Caco-2 (cell line): ENCODE measurements at regions of chr17 and their contacts with region 1.

Region 1: GRCh38 chr17:80649678-80650672 is 105.3 kb downstream of the RPTOR start:
- DNase-seq: peak; percentile 80 to 83
- H3K4me3 ChIP-seq: no peak overlapping the region
- H3K4me3 Mint-ChIP-seq: no peak overlapping the region
- H3K27ac Mint-ChIP-seq: peak overlapping the region; percentile 20
- H3K4me1 ChIP-seq: peaks cover 21% of the 10 kb centered on the region
- H3K4me1 Mint-ChIP-seq: peaks cover 26% of the 10 kb centered on the region
- H3K27me3 ChIP-seq: no peaks in the 10 kb centered on the region
- H3K27me3 Mint-ChIP-seq: no peaks in the 10 kb centered on the region
- CTCF ChIP-seq: peak; percentile 93 to 99

Region 2: DNA sequence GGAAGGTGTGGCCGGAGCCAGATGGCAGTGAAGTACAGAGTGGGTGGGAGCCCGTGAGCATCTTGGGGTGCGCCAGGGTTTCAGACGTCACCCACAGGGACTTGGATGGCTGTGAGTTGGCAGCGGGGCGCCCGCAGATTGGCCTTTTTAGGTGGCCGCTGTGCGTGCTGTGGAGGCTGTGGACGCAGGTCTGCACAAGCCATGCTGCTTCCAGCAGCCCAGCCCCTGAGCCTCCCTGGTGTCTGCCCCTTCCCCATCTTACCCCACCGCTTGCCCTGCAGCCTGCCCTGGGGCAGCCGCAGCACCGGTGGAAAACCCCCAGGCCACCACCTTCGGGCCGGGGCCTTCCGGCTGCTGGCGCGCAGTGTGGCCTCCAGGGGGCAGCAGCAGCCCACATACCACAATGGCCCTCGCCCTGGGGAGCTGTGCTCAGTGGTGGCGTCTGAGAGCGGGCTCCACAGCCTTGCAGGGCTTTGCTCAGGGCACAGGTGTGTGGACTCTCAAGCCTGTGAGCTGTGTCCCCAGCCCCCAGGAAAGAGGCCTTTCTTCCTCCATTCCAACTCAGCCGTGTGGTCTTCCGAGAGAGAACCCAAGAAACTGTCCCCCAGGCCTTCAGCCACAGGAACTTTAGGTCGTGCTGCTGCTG is 223.2 kb before region 1 on chr17:
- CTCF ChIA-PET with region 1: interaction called, 17 read pairs
- POLR2A ChIA-PET with region 1: no interaction called
- intact Hi-C with region 1: loop called (anchors 1 kb)
- DNase-seq: peak; percentile 80 to 91
- H3K4me3 ChIP-seq: no peak overlapping the region
- H3K4me3 Mint-ChIP-seq: no peak overlapping the region
- H3K27ac Mint-ChIP-seq: no peak overlapping the region
- H3K4me1 ChIP-seq: no peaks in the 10 kb centered on the region
- H3K4me1 Mint-ChIP-seq: no peaks in the 10 kb centered on the region
- H3K27me3 ChIP-seq: no peaks in the 10 kb centered on the region
- H3K27me3 Mint-ChIP-seq: peaks cover 6% of the 10 kb centered on the region
- CTCF ChIP-seq: peak; percentile 97 to 99

Region 3: GRCh38 chr17:80477647-80478478 is 172.1 kb before region 1 on chr17:
- CTCF ChIA-PET with region 1: no interaction called
- POLR2A ChIA-PET with region 1: no interaction called
- intact Hi-C with region 1: loop called (anchors 2 kb)
- DNase-seq: no peak
- H3K4me3 ChIP-seq: no peak overlapping the region; the same call in 1 of the 2 replicates
- H3K4me3 Mint-ChIP-seq: no peak overlapping the region
- H3K27ac Mint-ChIP-seq: no peak overlapping the region
- H3K4me1 ChIP-seq: peaks cover 29% of the 10 kb centered on the region
- H3K4me1 Mint-ChIP-seq: peaks cover 11% of the 10 kb centered on the region
- H3K27me3 ChIP-seq: peaks cover 6% of the 10 kb centered on the region
- H3K27me3 Mint-ChIP-seq: peaks cover 34% of the 10 kb centered on the region
- CTCF ChIP-seq: no peak

Region 4: DNA sequence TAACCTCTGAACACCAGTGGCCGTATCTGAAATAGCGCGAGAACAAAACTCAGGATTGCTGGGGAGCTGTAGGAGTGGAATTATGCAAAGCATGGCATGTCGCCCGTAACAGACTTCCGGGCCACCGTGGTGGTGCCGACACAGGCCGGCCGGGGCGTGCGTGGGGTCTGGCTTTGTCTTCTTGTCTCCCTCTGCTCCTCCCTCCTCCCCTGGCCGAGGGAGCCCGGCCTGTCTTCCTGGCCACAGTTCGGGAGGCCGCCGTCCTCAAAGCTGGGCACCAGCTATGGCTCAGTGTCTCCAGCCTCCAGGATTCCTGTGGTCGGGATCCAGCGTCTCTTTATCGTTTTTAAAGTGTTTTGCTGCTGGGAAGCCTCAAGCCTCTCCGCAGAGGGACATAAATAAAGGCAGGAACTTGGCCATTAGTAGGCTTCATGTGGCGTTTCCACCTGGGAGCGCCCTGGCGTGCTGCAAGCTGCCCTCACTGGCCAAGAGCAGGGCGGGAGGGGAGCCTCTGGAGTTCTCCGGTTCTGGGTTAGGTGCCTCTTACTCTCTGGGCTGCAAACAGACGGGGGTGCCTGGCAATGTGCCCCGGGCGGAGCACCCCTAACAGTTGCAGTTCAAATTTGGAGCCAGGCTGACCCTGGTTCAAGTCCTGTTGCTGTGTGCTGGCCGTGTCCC is 151.6 kb before region 1 on chr17:
- CTCF ChIA-PET with region 1: no interaction called
- POLR2A ChIA-PET with region 1: no interaction called
- intact Hi-C with region 1: no loop called
- DNase-seq: no peak
- H3K4me3 ChIP-seq: no peak overlapping the region
- H3K4me3 Mint-ChIP-seq: no peak overlapping the region
- H3K27ac Mint-ChIP-seq: no peak overlapping the region
- H3K4me1 ChIP-seq: no peaks in the 10 kb centered on the region
- H3K4me1 Mint-ChIP-seq: no peaks in the 10 kb centered on the region
- H3K27me3 ChIP-seq: no peaks in the 10 kb centered on the region
- H3K27me3 Mint-ChIP-seq: no peaks in the 10 kb centered on the region
- CTCF ChIP-seq: no peak

Region 5: DNA sequence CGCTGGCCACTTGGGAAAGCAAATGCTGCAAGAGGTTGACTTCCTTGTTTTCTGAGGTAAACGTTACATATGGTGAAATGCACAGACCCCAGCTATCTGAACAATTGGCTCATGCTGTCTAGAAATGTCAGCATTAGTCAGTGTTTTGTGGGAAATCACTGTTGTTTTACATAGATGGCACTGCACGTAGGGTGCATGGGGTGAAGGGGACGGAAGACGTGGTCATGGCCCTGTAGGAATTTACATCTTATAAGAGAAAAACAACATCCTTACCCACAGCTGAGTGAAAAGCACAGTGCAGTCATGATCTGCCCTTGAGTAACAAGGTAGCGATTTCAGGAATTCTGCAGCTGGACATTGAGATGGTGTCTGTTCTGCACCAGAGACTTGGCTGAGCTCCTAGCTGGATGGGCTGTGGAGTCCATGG is 90.1 kb before region 1 on chr17:
- CTCF ChIA-PET with region 1: no interaction called
- POLR2A ChIA-PET with region 1: no interaction called
- intact Hi-C with region 1: no loop called
- DNase-seq: no peak
- H3K4me3 ChIP-seq: no peak overlapping the region
- H3K4me3 Mint-ChIP-seq: no peak overlapping the region
- H3K27ac Mint-ChIP-seq: peak overlapping the region; percentile 11
- H3K4me1 ChIP-seq: no peaks in the 10 kb centered on the region
- H3K4me1 Mint-ChIP-seq: peaks cover 5% of the 10 kb centered on the region
- H3K27me3 ChIP-seq: no peaks in the 10 kb centered on the region
- H3K27me3 Mint-ChIP-seq: no peaks in the 10 kb centered on the region
- CTCF ChIP-seq: no peak

Region 6: DNA sequence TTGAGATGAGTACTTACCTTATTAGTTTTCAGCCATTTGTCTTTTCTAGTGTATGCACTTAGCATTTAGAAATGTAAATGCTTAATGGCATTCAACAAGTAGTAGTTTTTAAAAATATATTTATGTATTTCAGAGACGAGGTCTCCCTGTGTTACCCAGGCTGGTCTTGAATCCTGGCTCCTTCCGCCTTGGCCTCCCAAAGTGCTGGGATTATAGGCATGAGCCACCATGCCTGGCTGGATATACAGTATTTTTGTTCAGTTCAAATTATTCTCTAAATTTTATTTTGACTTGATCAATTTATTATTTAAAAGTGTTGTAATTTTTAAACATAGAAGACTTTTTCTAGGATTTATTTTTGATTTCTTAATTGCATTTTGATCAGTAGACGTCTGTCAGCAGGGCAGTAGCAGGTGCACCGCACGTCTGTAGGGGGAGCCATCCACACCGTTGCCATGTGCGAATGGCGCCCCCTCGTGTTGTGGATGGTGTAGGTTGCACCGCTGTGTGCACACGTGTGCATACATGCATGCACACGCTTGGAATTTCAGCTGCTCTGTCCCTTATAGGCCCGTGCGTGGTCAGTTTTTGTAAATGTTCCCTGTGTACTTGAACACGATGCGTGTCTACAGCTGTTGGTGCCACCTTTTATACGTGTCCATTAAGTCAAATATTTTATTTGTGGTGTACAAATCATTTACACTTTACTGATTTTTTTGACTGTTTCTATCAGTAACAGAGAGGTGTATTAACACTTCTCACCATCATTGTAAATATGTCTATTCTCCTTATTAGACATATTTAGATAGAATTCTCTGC is 74.7 kb before region 1 on chr17:
- CTCF ChIA-PET with region 1: interaction called, 8 read pairs
- POLR2A ChIA-PET with region 1: no interaction called
- intact Hi-C with region 1: loop called (anchors 1 kb)
- DNase-seq: peak; percentile 85 to 92
- H3K4me3 ChIP-seq: no peak overlapping the region
- H3K4me3 Mint-ChIP-seq: no peak overlapping the region
- H3K27ac Mint-ChIP-seq: no peak overlapping the region
- H3K4me1 ChIP-seq: no peaks in the 10 kb centered on the region
- H3K4me1 Mint-ChIP-seq: peaks cover 15% of the 10 kb centered on the region
- H3K27me3 ChIP-seq: no peaks in the 10 kb centered on the region
- H3K27me3 Mint-ChIP-seq: no peaks in the 10 kb centered on the region
- CTCF ChIP-seq: peak; percentile 99 to 100

Region 7: DNA sequence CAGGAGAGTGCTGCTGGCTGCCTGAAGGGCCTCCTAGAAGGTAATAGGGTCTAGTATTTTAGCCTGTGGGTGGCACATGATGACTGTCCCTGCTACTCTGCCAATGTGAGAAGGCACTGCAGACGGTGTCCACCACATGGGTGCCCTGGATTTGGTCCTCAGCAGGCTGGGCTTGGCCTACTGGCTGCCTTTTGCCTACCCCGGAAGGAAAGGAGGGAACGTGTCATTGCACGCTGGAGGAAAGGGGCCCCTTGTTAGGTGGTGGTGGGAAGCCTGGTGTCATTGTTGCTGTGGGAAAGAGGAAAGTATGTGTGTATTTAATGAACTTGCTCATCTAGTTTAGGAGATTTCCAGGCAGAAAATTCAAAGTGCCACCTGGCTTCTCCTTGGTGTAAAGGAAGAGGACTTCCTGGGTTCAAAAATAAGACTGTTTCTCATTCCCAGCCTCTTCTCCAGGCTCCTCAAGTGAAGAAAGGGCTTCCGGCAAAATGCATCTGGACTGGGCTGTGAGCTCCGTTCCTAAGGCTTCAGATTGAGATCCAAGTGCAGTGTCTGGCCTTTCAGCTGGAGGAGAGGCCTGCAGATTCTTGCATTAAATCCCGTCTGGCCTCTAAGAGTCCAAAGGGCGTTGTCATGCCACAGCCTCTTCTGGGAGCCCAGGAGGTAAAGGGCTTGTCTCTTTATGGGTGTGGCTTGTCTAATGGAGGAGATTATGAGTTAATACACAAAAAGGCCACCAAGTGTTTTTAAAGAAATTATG is 50.2 kb before region 1 on chr17:
- CTCF ChIA-PET with region 1: interaction called, 14 read pairs
- POLR2A ChIA-PET with region 1: no interaction called
- intact Hi-C with region 1: loop called (anchors 1 kb)
- DNase-seq: peak; percentile 87 to 92
- H3K4me3 ChIP-seq: no peak overlapping the region
- H3K4me3 Mint-ChIP-seq: peak overlapping the region; percentile 64
- H3K27ac Mint-ChIP-seq: peak overlapping the region; percentile 93
- H3K4me1 ChIP-seq: peaks cover 29% of the 10 kb centered on the region
- H3K4me1 Mint-ChIP-seq: peaks cover 45% of the 10 kb centered on the region
- H3K27me3 ChIP-seq: no peaks in the 10 kb centered on the region
- H3K27me3 Mint-ChIP-seq: no peaks in the 10 kb centered on the region
- CTCF ChIP-seq: no peak

Region 8: DNA sequence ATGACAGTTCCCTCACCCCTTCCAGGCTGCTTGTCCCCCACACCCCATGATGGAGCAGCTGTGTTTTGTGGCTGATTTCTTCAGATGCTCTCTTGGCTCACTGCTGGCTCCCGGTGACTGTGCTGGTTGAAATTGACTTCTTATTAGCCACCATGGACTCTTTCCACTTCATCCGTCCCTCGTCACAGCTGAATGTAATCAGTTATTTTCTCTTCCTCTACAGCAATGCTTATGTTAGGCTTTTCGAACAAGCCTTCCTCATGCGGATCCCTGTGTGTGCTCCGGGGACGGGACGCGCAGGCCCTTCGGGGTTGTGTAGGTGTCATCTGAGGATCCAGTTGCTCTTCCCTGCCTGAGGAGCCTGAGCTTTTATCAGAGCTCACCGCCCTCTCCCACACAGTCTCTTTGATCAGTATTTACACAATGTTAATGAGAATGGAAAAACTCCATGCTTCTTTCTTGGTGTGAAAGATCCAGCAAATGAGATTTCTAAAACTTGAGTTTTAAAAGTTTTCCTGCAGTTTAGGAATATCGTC is 17.9 kb before region 1 on chr17:
- CTCF ChIA-PET with region 1: interaction called, 10 read pairs
- POLR2A ChIA-PET with region 1: no interaction called
- intact Hi-C with region 1: no loop called
- DNase-seq: peak; percentile 57 to 59
- H3K4me3 ChIP-seq: no peak overlapping the region
- H3K4me3 Mint-ChIP-seq: peak overlapping the region; percentile 46
- H3K27ac Mint-ChIP-seq: peak overlapping the region; percentile 72
- H3K4me1 ChIP-seq: peaks cover 21% of the 10 kb centered on the region
- H3K4me1 Mint-ChIP-seq: peaks cover 16% of the 10 kb centered on the region
- H3K27me3 ChIP-seq: no peaks in the 10 kb centered on the region
- H3K27me3 Mint-ChIP-seq: no peaks in the 10 kb centered on the region
- CTCF ChIP-seq: no peak

Region 9: DNA sequence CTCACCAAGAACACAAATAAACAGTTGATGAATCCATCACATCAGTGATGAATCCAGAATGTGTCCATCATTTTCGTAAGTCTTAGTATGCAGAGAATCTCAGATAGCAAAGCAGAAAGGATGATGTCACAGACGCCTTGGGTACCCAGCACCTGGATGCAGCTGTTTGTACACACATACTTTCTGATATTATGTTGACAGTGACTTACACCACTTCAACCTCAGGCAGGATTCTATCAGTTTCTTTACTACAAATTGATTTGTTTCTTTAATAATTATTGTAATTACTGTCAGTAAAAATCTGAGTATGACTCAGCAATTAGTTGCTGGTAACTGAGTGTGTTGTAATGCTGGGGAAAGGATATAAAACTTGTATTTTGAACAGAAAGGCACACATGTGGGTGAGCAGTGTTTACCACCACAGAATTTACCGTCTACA is 54.4 kb after region 1 on chr17:
- CTCF ChIA-PET with region 1: no interaction called
- POLR2A ChIA-PET with region 1: no interaction called
- intact Hi-C with region 1: no loop called
- DNase-seq: no peak
- H3K4me3 ChIP-seq: no peak overlapping the region
- H3K4me3 Mint-ChIP-seq: no peak overlapping the region
- H3K27ac Mint-ChIP-seq: no peak overlapping the region
- H3K4me1 ChIP-seq: no peaks in the 10 kb centered on the region
- H3K4me1 Mint-ChIP-seq: no peaks in the 10 kb centered on the region
- H3K27me3 ChIP-seq: no peaks in the 10 kb centered on the region
- H3K27me3 Mint-ChIP-seq: no peaks in the 10 kb centered on the region
- CTCF ChIP-seq: no peak